Activated CD4-positive, alpha-beta T cell treated with anti-CD3 and anti-CD28 coated beads for 36 hours (primary cell): ENCODE measurements at regions of chr20 and their contacts with region 1.

Region 1: DNA sequence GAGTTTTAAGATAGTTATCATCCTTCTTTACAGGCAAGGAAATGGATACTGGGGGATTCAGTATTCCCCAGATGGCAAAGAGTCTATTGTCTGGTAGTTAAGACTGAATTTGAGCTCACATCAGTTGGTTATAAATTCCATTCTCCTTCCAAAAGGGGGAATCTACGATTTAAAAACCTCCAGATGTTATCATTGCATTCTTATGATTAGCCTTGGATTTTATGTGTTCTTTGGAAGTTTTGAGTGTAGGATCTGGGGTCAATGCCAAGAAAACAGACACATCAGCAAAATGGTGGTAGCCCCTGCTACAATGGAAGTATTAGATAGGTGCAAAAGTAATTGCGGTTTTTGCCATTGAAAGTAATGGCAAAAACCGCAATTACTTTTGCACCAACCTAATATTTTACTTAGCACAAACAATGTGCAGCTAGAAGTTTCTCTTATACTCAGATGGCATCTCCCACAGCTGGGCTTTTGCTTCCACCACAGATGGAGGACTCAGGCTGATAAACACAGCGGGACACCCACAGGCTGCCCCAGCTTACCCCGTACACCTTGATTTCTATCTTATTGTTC is 168.2 kb upstream of the RIN2 start:
- DNase-seq: no peak
- ATAC-seq: no peak
- H3K4me3 Mint-ChIP-seq: no peak overlapping the region
- H3K27ac Mint-ChIP-seq: no peak overlapping the region
- H3K4me1 Mint-ChIP-seq: no peaks in the 10 kb centered on the region
- H3K27me3 Mint-ChIP-seq: no peaks in the 10 kb centered on the region

Region 2: GRCh38 chr20:17885544-17885943 is 1704.3 kb before region 1 on chr20:
- CTCF ChIA-PET with region 1: no interaction called
- POLR2A ChIA-PET with region 1: no interaction called
- intact Hi-C with region 1: loop called in 1 of 2 experiments (anchors 5 kb)
- DNase-seq: no peak
- ATAC-seq: no peak
- H3K4me3 Mint-ChIP-seq: no peak overlapping the region
- H3K27ac Mint-ChIP-seq: no peak overlapping the region
- H3K4me1 Mint-ChIP-seq: no peaks in the 10 kb centered on the region
- H3K27me3 Mint-ChIP-seq: peaks cover 2% of the 10 kb centered on the region

Region 3: GRCh38 chr20:19815553-19815991 is 225.7 kb after region 1 on chr20:
- CTCF ChIA-PET with region 1: no interaction called
- POLR2A ChIA-PET with region 1: no interaction called
- intact Hi-C with region 1: no loop called
- DNase-seq: no peak
- ATAC-seq: peak; percentile 30
- H3K4me3 Mint-ChIP-seq: no peak overlapping the region
- H3K27ac Mint-ChIP-seq: no peak overlapping the region
- H3K4me1 Mint-ChIP-seq: peaks cover 5% of the 10 kb centered on the region
- H3K27me3 Mint-ChIP-seq: peaks cover 19% of the 10 kb centered on the region